Esophagus muscularis mucosa (tissue), 4 donors: ENCODE measurements at regions of chr11 and their contacts with region 1.

Region 1: GRCh38 chr11:121292495-121293287 is at the start of gene SC5D:
- DNase-seq: peak; percentile 98
- H3K4me3 ChIP-seq: peak within 1 kb of the TSS; percentile 74 to 92 (median 80)
- H3K27ac ChIP-seq: peak within 1 kb of the TSS; percentile 87 to 98 (median 92)
- H3K4me1 ChIP-seq: peaks cover 6 to 27% (median 19%) of the 10 kb centered on the region in 4 donors
- H3K27me3 ChIP-seq: no peaks in the 10 kb centered on the region
- CTCF ChIP-seq: peak in 1 of 3 experiments; percentile 12
- EP300 ChIP-seq: no peak
- POLR2A ChIP-seq: peak; percentile 46
- total RNA-seq, gene SC5D: 18.5 to 23.7 (median 20.6) TPM

Region 2: DNA sequence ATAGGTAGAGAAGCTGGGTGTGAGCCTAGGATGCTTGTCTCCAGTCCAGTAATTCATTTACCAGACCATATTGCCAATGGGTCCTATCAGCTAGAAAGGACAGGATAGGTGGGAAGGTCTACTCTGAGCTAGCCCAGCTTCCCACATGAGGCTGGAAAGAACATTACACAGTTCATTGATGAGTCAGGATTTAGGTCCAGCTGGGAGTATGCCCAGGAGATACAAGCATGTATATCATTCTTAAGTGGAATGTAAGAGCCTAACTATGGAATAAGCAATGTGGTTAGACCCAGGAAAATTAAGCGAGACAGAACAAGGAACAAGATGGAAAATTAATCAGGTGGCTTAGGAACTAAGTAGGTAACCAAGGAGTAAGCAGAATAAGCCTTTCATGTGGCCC is 327.8 kb before region 1 on chr11:
- intact Hi-C with region 1: no loop called
- DNase-seq: no peak
- H3K4me3 ChIP-seq: no peak overlapping the region
- H3K27ac ChIP-seq: no peak overlapping the region
- H3K4me1 ChIP-seq: no peaks in the 10 kb centered on the region
- H3K27me3 ChIP-seq: peaks cover 0 to 27% (median 0%) of the 10 kb centered on the region in 4 donors
- CTCF ChIP-seq: no peak
- EP300 ChIP-seq: no peak
- POLR2A ChIP-seq: no peak

Region 3: GRCh38 chr11:121023848-121024751 is 268.6 kb before region 1 on chr11 and contains the start of gene TBCEL:
- intact Hi-C with region 1: no loop called
- DNase-seq: peak; percentile 94
- H3K4me3 ChIP-seq: peak within 1 kb of the TSS; percentile 65 to 94 (median 78)
- H3K27ac ChIP-seq: peak within 1 kb of the TSS; percentile 29 to 73 (median 66)
- H3K4me1 ChIP-seq: peaks cover 14 to 26% (median 22%) of the 10 kb centered on the region in 4 donors
- H3K27me3 ChIP-seq: no peaks in the 10 kb centered on the region
- CTCF ChIP-seq: no peak
- EP300 ChIP-seq: no peak
- POLR2A ChIP-seq: no peak
- total RNA-seq, gene TBCEL: 25.0 to 31.4 (median 27.9) TPM

Region 4: GRCh38 chr11:121249039-121249663 is 43.5 kb before region 1 on chr11:
- intact Hi-C with region 1: loop called (anchors 5 kb)
- DNase-seq: no peak
- H3K4me3 ChIP-seq: no peak overlapping the region
- H3K27ac ChIP-seq: no peak overlapping the region
- H3K4me1 ChIP-seq: peaks cover 0 to 8% (median 0%) of the 10 kb centered on the region in 4 donors
- H3K27me3 ChIP-seq: no peaks in the 10 kb centered on the region
- CTCF ChIP-seq: peak; percentile 74 to 91 (median 84)
- EP300 ChIP-seq: no peak
- POLR2A ChIP-seq: no peak